ENCODE measurements at regions of chr2 and their contacts with region 1.

Region 1: DNA sequence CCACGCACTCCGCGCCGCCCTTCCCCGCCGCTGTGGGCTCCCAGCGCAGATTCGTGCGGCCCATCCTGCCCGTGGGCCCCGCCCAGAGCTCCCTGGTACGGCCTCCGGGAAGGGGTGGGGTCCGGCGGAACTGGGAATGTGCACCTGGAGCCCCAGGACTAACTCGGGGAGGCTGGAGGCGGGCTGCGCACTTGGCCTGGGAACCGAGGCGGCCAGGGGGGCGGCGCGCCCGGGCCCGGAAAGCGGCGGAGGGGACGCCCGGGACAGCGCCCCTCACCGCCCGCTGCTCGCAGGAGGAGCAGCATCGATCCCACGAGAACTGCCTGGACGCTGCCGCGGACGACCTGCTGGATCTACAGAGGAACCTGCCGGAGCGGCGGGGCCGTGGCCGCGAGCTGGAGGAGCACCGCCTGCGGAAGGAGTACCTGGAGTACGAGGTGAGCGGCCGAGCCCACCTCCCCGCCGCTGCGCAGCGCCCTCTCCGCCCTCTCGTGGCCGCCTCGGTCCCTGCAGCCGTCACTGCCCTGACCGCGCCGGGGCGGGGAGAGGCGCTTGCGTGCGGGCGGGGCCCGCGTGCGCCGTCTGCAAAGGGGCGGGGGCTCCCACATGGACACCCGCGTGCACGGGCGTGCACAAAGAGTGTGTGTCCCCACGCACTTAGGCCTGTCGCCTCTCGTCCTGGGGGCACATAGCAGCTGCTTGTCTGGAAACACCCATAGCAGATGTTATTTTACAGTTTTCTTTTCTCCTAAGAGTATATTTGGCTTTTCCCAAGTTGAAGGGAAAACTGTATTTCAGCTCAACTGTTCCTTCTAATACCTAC is 25.2 kb downstream of the PSD4 start:
- DNase-seq: peak; percentile 89
- ATAC-seq: peak; percentile 82
- H3K4me3 Mint-ChIP-seq: peak overlapping the region; percentile 65
- H3K27ac Mint-ChIP-seq: no peak overlapping the region
- H3K4me1 Mint-ChIP-seq: peaks cover under 1% of the 10 kb centered on the region; the same call in 1 of the 2 replicates
- H3K27me3 Mint-ChIP-seq: peaks cover 22% of the 10 kb centered on the region
- CTCF ChIP-seq: peak; percentile 79

Region 2: GRCh38 chr2:113080134-113080533 is 118.9 kb before region 1 on chr2:
- CTCF ChIA-PET with region 1: interaction called, 96 read pairs
- POLR2A ChIA-PET with region 1: interaction called, 5 read pairs
- DNase-seq: peak; percentile 75
- ATAC-seq: peak; percentile 96
- H3K4me3 Mint-ChIP-seq: no peak overlapping the region
- H3K27ac Mint-ChIP-seq: no peak overlapping the region
- H3K4me1 Mint-ChIP-seq: peaks cover 8% of the 10 kb centered on the region
- H3K27me3 Mint-ChIP-seq: peaks cover 26% of the 10 kb centered on the region
- CTCF ChIP-seq: peak; percentile 39; the same call in 1 of the 2 replicates

Region 3: GRCh38 chr2:113122364-113122763 is 76.6 kb before region 1 on chr2:
- CTCF ChIA-PET with region 1: no interaction called
- POLR2A ChIA-PET with region 1: no interaction called
- DNase-seq: no peak
- ATAC-seq: no peak
- H3K4me3 Mint-ChIP-seq: no peak overlapping the region
- H3K27ac Mint-ChIP-seq: no peak overlapping the region
- H3K4me1 Mint-ChIP-seq: no peaks in the 10 kb centered on the region
- H3K27me3 Mint-ChIP-seq: peaks cover 27% of the 10 kb centered on the region
- CTCF ChIP-seq: no peak

Region 4: GRCh38 chr2:113164930-113165585 is 33.9 kb before region 1 on chr2:
- CTCF ChIA-PET with region 1: interaction called, 14 read pairs
- POLR2A ChIA-PET with region 1: no interaction called
- DNase-seq: no peak
- ATAC-seq: peak; percentile 80
- H3K4me3 Mint-ChIP-seq: no peak overlapping the region
- H3K27ac Mint-ChIP-seq: no peak overlapping the region
- H3K4me1 Mint-ChIP-seq: peaks cover 12% of the 10 kb centered on the region
- H3K27me3 Mint-ChIP-seq: peaks cover 7% of the 10 kb centered on the region; the same call in 1 of the 2 replicates
- CTCF ChIP-seq: no peak

Region 5: GRCh38 chr2:113211226-113212105 is 12.5 kb after region 1 on chr2:
- CTCF ChIA-PET with region 1: interaction called, 37 read pairs
- POLR2A ChIA-PET with region 1: no interaction called
- DNase-seq: no peak
- ATAC-seq: no peak
- H3K4me3 Mint-ChIP-seq: no peak overlapping the region
- H3K27ac Mint-ChIP-seq: no peak overlapping the region
- H3K4me1 Mint-ChIP-seq: peaks cover 16% of the 10 kb centered on the region
- H3K27me3 Mint-ChIP-seq: 0 out of 2 replicates have a peak, but pooled peaks cover 2% of the 10 kb centered on the region
- CTCF ChIP-seq: no peak

Region 6: DNA sequence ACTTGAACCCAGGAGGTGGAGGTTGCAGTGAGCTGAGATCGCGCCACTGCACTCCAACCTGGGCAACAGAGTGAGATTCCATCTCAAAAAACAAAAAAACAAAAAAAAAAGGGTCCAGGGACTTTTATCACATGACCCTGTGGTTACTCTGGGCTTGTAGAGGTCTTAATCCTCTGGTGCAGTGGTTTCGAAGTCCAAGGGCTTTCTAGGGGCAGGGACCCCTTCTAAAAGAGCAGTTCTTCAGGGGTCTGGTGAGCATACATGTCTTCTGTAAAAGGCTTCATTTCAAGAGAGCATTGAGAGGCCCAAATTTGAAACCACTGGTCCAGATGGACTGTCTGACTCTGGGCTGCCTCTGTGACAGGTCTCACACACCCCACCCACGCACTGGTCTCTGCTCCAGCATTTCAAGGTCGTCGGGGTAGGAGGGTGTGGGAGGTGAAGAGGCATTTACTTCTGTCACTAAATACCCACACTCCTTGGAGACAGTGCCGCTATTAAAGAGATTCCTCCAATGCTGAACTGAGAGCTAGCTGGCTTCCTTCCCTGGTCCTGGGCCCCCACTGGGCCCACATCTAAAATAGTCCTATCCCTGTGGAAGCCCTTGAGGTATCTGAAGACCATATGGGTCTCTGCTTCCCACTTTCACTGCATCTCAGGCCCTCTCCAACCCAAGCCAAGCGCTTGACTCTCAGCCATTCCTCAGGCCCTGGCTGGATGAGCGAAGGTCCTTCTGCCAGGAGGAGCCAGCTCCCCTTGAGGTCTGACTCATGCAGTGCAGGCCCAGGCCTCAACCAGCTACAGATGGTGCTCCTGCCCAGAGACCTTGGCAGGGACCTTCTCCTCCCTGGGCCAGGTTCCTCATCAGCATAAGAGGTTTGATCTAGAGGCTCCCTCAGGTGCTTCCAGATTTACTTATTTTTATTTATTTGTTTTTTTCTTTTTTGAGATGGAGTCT is 34.9 kb after region 1 on chr2:
- CTCF ChIA-PET with region 1: interaction called, 19 read pairs
- POLR2A ChIA-PET with region 1: no interaction called
- DNase-seq: no peak
- ATAC-seq: peak; percentile 42
- H3K4me3 Mint-ChIP-seq: no peak overlapping the region
- H3K27ac Mint-ChIP-seq: no peak overlapping the region
- H3K4me1 Mint-ChIP-seq: peaks cover 3% of the 10 kb centered on the region; the same call in 1 of the 2 replicates
- H3K27me3 Mint-ChIP-seq: 0 out of 2 replicates have a peak, but pooled peaks cover 4% of the 10 kb centered on the region
- CTCF ChIP-seq: no peak

Region 7: DNA sequence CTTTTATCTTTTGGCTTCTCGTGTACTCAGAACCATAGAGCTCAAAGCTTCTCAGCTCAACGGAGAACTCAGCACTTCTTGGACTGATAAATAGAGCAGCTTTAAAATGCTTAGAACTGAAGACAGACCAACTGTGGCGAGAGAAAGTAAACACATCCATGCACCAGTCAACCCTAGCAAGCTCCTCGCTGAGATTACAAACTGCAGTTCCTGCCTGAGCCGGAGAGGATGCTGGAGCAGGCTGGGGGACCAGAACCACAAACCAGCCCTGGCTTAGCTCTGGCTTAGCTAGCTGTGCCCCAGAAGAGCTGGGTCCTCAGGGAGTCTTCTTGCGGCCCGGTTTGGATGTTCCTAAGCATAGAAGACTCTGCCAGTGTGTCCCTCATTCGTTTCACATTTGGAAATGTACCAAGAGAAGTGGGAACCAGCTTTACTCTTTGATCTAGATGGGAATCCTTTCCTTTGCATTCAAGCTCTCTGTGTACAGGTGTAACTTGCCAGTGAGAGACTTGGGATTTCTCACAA is 74.1 kb after region 1 on chr2:
- CTCF ChIA-PET with region 1: interaction called, 29 read pairs
- POLR2A ChIA-PET with region 1: no interaction called
- DNase-seq: peak; percentile 70
- ATAC-seq: peak; percentile 88
- H3K4me3 Mint-ChIP-seq: peak overlapping the region; percentile 19
- H3K27ac Mint-ChIP-seq: no peak overlapping the region
- H3K4me1 Mint-ChIP-seq: peaks cover 33% of the 10 kb centered on the region
- H3K27me3 Mint-ChIP-seq: peaks cover 96% of the 10 kb centered on the region
- CTCF ChIP-seq: no peak